ENCODE measurements at regions of chr19 and their contacts with region 1.

Region 1: GRCh38 chr19:14031719-14032480 is at the start of gene IL27RA:
- DNase-seq: peak; percentile 78
- H3K4me3 Mint-ChIP-seq: peak within 1 kb of the TSS; percentile 95
- H3K27ac Mint-ChIP-seq: peak within 1 kb of the TSS; percentile 96
- H3K4me1 Mint-ChIP-seq: peaks cover 13% of the 10 kb centered on the region
- H3K27me3 Mint-ChIP-seq: peaks cover 3% of the 10 kb centered on the region
- total RNA-seq, gene IL27RA: 82.5 and 84.9 TPM in 2 replicates

Region 2: DNA sequence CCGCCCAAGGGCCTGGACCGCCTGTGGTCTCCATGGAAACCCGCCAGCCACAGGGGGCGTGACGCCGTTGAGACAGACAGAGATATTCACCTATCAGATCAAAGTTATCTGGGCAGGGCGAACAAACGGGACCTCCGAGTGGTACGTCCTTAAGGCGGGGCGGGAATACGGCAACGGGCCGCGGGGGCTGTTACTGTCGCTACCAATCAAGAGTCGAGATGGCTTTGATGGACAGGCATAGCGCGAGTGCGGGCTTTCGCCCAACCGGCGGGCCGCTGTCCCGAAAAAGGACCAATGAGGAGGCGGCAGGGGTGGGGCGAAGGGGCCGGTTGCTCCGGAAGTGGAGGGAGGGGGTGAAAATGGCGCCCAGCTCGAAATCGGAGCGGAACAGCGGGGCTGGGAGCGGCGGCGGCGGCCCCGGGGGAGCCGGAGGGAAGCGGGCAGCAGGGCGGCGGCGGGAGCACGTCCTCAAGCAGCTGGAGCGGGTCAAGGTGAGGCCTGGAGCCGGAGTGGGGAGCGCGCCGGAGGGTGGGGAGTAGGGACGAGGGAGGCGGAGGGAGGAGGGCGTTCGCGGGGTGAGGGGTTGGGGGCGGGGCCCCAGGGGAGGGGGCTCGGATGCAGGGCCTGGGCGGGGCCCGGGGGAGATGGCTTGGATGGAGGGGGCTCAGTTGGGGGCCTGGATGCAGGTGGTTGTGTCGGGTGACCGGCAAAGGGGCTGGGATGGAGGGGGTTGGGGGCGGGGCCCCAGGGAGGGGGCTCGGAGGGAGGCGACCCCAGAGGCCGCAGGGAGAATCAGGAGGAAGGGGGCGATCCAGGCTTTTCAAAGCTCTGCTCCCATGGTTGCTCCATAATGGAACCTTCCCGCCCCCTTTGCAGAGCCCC is 79.5 kb before region 1 on chr19 and contains the start of gene DCAF15:
- intact Hi-C with region 1: loop called (anchors 1 kb)
- DNase-seq: peak; percentile 99
- H3K4me3 Mint-ChIP-seq: peak within 1 kb of the TSS; percentile 96
- H3K27ac Mint-ChIP-seq: peak within 1 kb of the TSS; percentile 86
- H3K4me1 Mint-ChIP-seq: peaks cover 17% of the 10 kb centered on the region
- H3K27me3 Mint-ChIP-seq: no peaks in the 10 kb centered on the region
- total RNA-seq, gene DCAF15: 57.8 and 61.5 TPM in 2 replicates